Activated T-helper 2 cell treated with anti-CD3 and anti-CD28 coated beads, Interferon-gamma antibody, Interleukin-2, Interleukin-4, amounts not matched to agents 10 μg/mL and 5 μg/mL and 100 μg/mL, durations not matched to agents 14 hours and 24 hours and 36 hours (primary cell): ENCODE measurements at regions of chr1 and their contacts with region 1.

Region 1: GRCh38 chr1:100866041-100866900 is 28.4 kb downstream of the EXTL2 start:
- DNase-seq: no peak
- H3K4me3 Mint-ChIP-seq: no peak overlapping the region
- H3K27ac Mint-ChIP-seq: no peak overlapping the region
- H3K4me1 Mint-ChIP-seq: no peaks in the 10 kb centered on the region
- H3K27me3 Mint-ChIP-seq: peaks cover 4% of the 10 kb centered on the region

Region 2: DNA sequence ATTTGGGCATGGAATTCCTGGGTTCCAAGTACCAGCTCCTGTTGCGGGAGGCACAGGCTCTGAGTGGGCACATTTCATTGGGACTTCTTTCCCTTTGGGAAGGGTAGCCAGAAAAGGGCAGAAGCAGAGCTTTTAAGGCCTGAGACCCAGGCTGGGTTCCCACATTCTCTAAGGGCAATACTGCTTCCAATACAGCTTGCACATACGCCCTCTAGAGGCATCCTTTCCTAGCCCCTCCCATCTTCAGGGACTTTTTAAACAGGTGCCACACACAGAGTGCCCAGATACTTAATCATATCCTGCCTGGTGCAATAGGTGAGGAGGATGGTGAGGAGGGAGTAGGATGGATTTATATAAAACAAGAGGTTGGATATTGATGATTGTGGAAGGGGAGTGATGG is 322.6 kb before region 1 on chr1:
- intact Hi-C with region 1: loop called (anchors 5 kb)
- DNase-seq: no peak
- H3K4me3 Mint-ChIP-seq: no peak overlapping the region
- H3K27ac Mint-ChIP-seq: no peak overlapping the region
- H3K4me1 Mint-ChIP-seq: no peaks in the 10 kb centered on the region
- H3K27me3 Mint-ChIP-seq: peaks cover 45% of the 10 kb centered on the region

Region 3: DNA sequence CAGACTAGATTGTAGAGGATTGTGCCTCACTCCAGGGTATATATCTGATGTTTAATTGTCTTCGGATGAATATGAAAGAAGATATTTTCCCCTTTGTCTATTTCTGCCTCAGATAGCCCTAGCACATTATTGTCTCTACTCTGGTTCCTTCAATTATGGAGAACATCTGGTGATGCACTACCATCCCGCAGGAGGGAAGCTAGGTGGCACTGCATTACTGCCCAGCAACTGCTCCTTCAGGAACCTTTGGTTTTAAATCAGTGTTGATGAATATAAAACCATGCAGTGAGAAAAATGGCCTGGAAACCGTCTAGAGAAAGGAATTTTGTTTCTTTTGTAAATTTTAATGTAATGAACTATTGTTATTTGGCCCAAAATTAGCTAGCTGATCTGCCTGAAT is 259.8 kb before region 1 on chr1:
- intact Hi-C with region 1: loop called (anchors 5 kb)
- DNase-seq: no peak
- H3K4me3 Mint-ChIP-seq: no peak overlapping the region
- H3K27ac Mint-ChIP-seq: no peak overlapping the region
- H3K4me1 Mint-ChIP-seq: no peaks in the 10 kb centered on the region
- H3K27me3 Mint-ChIP-seq: peaks cover 8% of the 10 kb centered on the region